ENCODE measurements at regions of chr1 and their contacts with region 1.

Region 1: GRCh38 chr1:94061513-94062443 is 59.2 kb downstream of the ABCA4 start:
- DNase-seq: peak; percentile 27 to 52
- ATAC-seq: peak; percentile 83
- H3K4me3 ChIP-seq: no peak overlapping the region
- H3K27ac ChIP-seq: peak overlapping the region in 3 of 4 donors; percentile 14 to 53 (median 19)
- H3K4me1 ChIP-seq: peaks cover 7 to 14% of the 10 kb centered on the region in 2 donors
- H3K27me3 ChIP-seq: no peaks in the 10 kb centered on the region
- CTCF ChIP-seq: peak; percentile 87 to 90 (median 88)
- POLR2A ChIP-seq: no peak

Region 2: DNA sequence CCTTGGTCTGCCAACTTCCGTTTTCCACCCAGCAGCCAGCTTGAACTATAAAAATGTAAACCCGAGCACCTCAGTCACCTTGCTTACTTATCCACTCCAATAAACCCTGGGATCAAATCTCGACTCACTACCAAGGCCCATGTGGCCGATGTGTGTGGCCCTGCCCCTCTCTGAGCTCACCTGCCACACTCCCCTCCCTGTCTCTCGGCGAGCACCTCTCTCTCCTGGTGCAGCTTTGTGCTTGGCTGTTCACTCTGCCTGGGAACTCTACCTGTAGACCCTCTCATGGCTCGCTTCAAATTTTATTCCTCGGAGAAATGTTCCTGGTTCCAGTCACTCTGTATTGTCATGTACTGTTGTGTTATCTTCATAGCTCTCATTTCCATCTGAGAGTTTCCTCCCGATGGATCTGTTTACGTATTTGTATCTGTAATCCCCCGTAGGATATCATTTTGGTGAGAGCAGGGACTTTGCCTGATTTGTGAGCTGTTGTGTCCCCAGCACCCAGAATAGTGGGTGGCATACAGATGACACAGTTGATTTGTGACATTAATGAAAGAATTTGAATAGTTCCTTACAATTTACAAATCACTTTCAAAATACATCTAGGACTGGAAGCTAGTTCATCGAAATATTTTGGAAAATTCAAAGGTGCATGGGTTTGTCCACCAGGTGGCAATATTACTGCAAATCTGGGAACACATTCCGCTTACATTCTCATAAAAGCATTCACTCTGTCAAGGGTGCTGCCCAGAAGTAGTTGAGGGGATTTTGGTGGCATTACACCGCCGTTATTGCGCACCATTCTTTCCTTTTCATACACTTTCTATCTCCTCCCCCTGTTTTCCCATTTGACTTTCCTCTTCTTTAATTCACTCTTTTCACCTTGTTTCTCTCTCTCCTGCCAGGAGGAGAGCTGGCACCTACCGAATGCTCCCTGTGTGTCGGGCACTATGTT is 36.1 kb before region 1 on chr1:
- in situ Hi-C with region 1: no loop called
- intact Hi-C with region 1: loop called (anchors 2 kb)
- DNase-seq: no peak
- ATAC-seq: peak; percentile 60 to 69
- H3K4me3 ChIP-seq: no peak overlapping the region
- H3K27ac ChIP-seq: no peak overlapping the region
- H3K4me1 ChIP-seq: peaks cover 0 to 3% of the 10 kb centered on the region in 2 donors
- H3K27me3 ChIP-seq: no peaks in the 10 kb centered on the region
- CTCF ChIP-seq: peak; percentile 64 to 76 (median 70)
- POLR2A ChIP-seq: no peak

Region 3: DNA sequence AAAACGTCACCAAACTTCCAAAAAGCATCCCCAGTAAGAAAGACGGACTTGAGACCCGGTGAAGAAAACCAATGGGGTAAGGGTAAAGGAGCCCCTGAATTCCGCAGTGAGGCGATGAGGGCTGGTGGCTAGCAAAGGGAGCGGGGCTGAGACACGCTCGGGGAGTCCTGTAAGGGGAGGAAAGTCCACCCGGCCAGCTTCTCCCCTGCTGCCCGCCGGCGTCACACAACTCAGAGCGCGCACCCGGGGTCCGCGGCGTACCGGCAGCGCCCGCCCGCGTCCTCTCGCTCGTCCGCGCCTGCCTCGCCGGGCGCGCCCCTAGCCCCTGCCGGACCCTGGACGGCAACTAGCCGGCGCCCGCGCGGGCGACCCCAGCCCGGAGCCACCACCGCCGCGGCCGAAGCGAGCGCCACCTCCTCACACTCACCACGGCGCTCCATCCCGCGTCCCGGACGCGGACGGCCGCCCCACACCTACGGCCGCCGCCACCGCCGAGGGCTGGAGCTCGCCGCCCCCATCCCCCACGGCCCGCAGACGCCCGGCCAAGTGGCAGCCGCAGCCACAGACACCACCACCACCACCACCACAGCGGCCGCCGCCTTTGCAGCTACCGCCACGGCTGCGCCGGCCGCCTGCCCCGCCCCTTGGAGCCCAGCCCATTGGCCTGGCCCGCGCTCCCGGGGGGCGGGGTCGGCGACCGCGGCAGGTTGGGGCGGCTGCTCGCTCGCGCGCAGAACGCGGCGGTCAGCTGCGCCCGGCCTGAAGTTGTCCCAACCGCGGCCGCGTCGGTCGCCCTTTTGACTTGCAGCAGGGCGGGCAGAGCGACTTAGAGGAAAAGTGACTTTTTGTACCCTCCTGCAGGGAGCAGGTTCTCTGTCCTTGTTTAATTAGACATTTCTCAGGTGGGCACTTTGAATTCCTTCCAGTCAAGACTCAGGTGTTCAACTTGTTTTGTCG is 185.6 kb after region 1 on chr1:
- in situ Hi-C with region 1: no loop called
- intact Hi-C with region 1: loop called (anchors 2 kb)
- DNase-seq: peak; percentile 44 to 60
- ATAC-seq: peak; percentile 87 to 92
- H3K4me3 ChIP-seq: peak overlapping the region; percentile 60 to 71 (median 65)
- H3K27ac ChIP-seq: peak overlapping the region; percentile 65 to 81 (median 78)
- H3K4me1 ChIP-seq: peaks cover 3 to 6% of the 10 kb centered on the region in 2 donors
- H3K27me3 ChIP-seq: no peaks in the 10 kb centered on the region
- CTCF ChIP-seq: no peak
- POLR2A ChIP-seq: peak; percentile 79 to 85

Region 4: GRCh38 chr1:94335950-94336349 is 274.2 kb after region 1 on chr1:
- in situ Hi-C with region 1: loop called (anchors 5 to 10 kb)
- intact Hi-C with region 1: loop called (anchors 1 kb)
- DNase-seq: peak; percentile 59 to 62
- ATAC-seq: peak; percentile 97 to 99
- H3K4me3 ChIP-seq: no peak overlapping the region
- H3K27ac ChIP-seq: peak overlapping the region in 1 of 4 donors; percentile 63
- H3K4me1 ChIP-seq: peaks cover 0 to 8% of the 10 kb centered on the region in 2 donors
- H3K27me3 ChIP-seq: no peaks in the 10 kb centered on the region
- CTCF ChIP-seq: peak; percentile 68 to 85 (median 82)
- POLR2A ChIP-seq: no peak

Region 5: DNA sequence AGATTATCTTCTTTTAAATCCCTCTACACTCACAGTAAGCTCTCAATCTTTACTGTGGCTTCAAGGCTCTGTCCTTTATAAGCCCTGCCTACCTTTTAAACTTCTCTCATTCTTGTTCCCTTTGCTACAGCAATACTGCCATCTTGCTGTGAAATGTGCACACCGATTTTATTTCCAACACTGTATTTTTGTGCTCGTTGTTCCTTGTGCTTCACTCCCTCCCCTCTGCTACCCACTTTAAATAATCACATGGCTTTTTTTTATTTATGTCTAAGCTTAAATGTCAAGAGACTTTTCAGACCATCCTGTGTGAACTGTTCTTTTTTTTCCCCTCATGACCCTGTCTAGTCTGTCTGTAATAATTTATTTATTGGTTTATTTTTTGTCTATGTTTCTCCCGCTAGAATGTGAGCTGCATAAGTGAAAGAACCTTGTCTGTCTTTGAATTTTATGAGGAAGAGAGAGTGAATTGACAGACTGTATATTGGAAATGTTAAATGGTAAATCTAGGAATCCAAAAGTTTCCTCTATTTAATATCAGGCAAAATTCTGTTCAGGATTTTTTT is 402.1 kb after region 1 on chr1:
- in situ Hi-C with region 1: no loop called
- intact Hi-C with region 1: loop called (anchors 10 kb)
- DNase-seq: no peak
- ATAC-seq: peak; percentile 69 to 78
- H3K4me3 ChIP-seq: no peak overlapping the region
- H3K27ac ChIP-seq: no peak overlapping the region
- H3K4me1 ChIP-seq: peaks cover 0 to 6% of the 10 kb centered on the region in 2 donors
- H3K27me3 ChIP-seq: no peaks in the 10 kb centered on the region
- CTCF ChIP-seq: peak; percentile 29 to 57 (median 51)
- POLR2A ChIP-seq: no peak